Naive thymus-derived CD4-positive, alpha-beta T cell (primary cell): ENCODE measurements at regions of chr2 and their contacts with region 1.

Region 1: GRCh38 chr2:121530212-121530705 is 421 bp upstream of the RNU4ATAC start:
- DNase-seq: peak in 4 of 9 donors; percentile 74 to 91 (median 87)
- ATAC-seq: peak; percentile 83
- H3K4me3 ChIP-seq: peak overlapping the region; percentile 99
- H3K4me3 Mint-ChIP-seq: peak overlapping the region; percentile 85 to 99 (median 96)
- H3K27ac ChIP-seq: peak overlapping the region; percentile 98
- H3K27ac Mint-ChIP-seq: peak overlapping the region; percentile 95 to 100 (median 99)
- H3K4me1 ChIP-seq: peaks cover 9 to 11% of the 10 kb centered on the region in 2 donors
- H3K4me1 Mint-ChIP-seq: peaks cover 18 to 65% (median 43%) of the 10 kb centered on the region in 7 donors
- H3K27me3 ChIP-seq: no peaks in the 10 kb centered on the region
- H3K27me3 Mint-ChIP-seq: no peaks in the 10 kb centered on the region

Region 2: GRCh38 chr2:121400201-121400600 is 130.1 kb before region 1 on chr2:
- CTCF ChIA-PET with region 1: interaction called, 4 read pairs
- POLR2A ChIA-PET with region 1: no interaction called
- intact Hi-C with region 1: loop called (anchors 1 kb)
- DNase-seq: no peak
- ATAC-seq: no peak
- H3K4me3 ChIP-seq: no peak overlapping the region
- H3K4me3 Mint-ChIP-seq: no peak overlapping the region
- H3K27ac ChIP-seq: no peak overlapping the region
- H3K27ac Mint-ChIP-seq: peak overlapping the region in 2 of 9 donors; percentile 38 to 67
- H3K4me1 ChIP-seq: no peaks in the 10 kb centered on the region
- H3K4me1 Mint-ChIP-seq: peaks cover 0 to 3% (median 0%) of the 10 kb centered on the region in 7 donors
- H3K27me3 ChIP-seq: no peaks in the 10 kb centered on the region
- H3K27me3 Mint-ChIP-seq: no peaks in the 10 kb centered on the region

Region 3: GRCh38 chr2:121596221-121597080 is 66.2 kb after region 1 on chr2:
- CTCF ChIA-PET with region 1: no interaction called
- POLR2A ChIA-PET with region 1: no interaction called
- intact Hi-C with region 1: loop called (anchors 2 kb)
- DNase-seq: peak in 4 of 9 donors; percentile 9 to 17 (median 14)
- ATAC-seq: peak; percentile 95
- H3K4me3 ChIP-seq: no peak overlapping the region
- H3K4me3 Mint-ChIP-seq: peak overlapping the region; percentile 51 to 90 (median 77)
- H3K27ac ChIP-seq: peak overlapping the region; percentile 55
- H3K27ac Mint-ChIP-seq: peak overlapping the region; percentile 33 to 96 (median 83)
- H3K4me1 ChIP-seq: peaks cover 9 to 14% of the 10 kb centered on the region in 2 donors
- H3K4me1 Mint-ChIP-seq: peaks cover 30 to 66% (median 59%) of the 10 kb centered on the region in 7 donors
- H3K27me3 ChIP-seq: no peaks in the 10 kb centered on the region
- H3K27me3 Mint-ChIP-seq: no peaks in the 10 kb centered on the region

Region 4: GRCh38 chr2:121699421-121700333 is 169.4 kb after region 1 on chr2:
- CTCF ChIA-PET with region 1: no interaction called
- POLR2A ChIA-PET with region 1: interaction called, 11 read pairs
- intact Hi-C with region 1: loop called in 1 of 2 experiments (anchors 1 kb)
- DNase-seq: peak; percentile 32 to 80 (median 56)
- ATAC-seq: peak; percentile 98
- H3K4me3 ChIP-seq: peak overlapping the region; percentile 12
- H3K4me3 Mint-ChIP-seq: peak overlapping the region; percentile 73 to 92 (median 82)
- H3K27ac ChIP-seq: no peak overlapping the region
- H3K27ac Mint-ChIP-seq: peak overlapping the region; percentile 73 to 96 (median 90)
- H3K4me1 ChIP-seq: peaks cover 13 to 31% of the 10 kb centered on the region in 2 donors
- H3K4me1 Mint-ChIP-seq: peaks cover 13 to 46% (median 24%) of the 10 kb centered on the region in 7 donors
- H3K27me3 ChIP-seq: no peaks in the 10 kb centered on the region
- H3K27me3 Mint-ChIP-seq: no peaks in the 10 kb centered on the region

Region 5: DNA sequence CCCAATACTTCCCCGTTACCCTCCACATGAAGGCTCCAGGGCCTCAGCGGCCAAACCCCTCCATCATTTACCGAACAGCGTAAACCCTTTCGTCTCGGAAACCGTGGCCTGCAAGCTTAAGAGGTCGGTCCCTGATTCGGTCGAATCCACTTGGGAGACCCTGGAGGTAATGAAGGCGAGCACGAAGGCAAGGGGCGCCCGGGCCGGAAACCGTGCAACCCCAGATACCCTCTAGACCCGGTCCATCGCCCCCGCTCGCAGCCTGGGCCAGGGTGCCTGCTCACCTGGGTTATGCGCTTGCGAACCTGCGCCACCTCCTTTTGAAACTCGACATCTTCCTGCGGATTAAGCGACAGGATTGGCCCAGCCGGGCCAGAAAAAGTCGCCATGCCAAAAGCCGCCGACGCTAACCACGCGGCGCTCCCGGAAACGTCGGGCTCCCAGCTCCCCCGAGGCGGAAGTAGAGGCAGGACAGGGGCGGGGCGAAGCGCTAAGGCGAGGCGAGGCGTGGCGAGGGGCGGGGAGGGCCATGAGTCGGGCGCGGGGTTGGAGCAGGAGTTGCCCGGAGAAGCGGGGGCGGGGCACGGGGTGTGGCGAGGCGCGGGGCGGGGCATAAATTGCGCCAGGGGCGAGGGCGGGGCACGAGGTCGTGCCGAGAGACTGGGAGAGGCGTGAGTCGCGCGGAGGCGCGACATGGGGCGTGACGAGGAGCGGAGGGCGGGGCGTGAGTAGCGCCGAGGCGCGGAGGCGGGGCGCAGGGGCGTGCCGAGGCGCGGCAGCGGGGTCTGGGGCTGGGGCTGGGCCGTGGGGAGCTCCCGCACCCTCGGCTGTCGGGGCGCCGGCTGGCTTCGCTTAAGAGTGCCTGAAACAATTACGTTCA is 206.4 kb after region 1 on chr2 and contains the start of gene NIFK:
- CTCF ChIA-PET with region 1: no interaction called
- POLR2A ChIA-PET with region 1: interaction called, 41 read pairs
- intact Hi-C with region 1: loop called (anchors 1 kb)
- DNase-seq: peak; percentile 98 to 100 (median 99)
- ATAC-seq: peak; percentile 96
- H3K4me3 ChIP-seq: peak within 1 kb of the TSS; percentile 80
- H3K4me3 Mint-ChIP-seq: peak within 1 kb of the TSS; percentile 81 to 99 (median 95)
- H3K27ac ChIP-seq: peak within 1 kb of the TSS; percentile 89
- H3K27ac Mint-ChIP-seq: peak within 1 kb of the TSS; percentile 85 to 99 (median 97)
- H3K4me1 ChIP-seq: peaks cover 13 to 19% of the 10 kb centered on the region in 2 donors
- H3K4me1 Mint-ChIP-seq: peaks cover 17 to 54% (median 38%) of the 10 kb centered on the region in 7 donors
- H3K27me3 ChIP-seq: no peaks in the 10 kb centered on the region
- H3K27me3 Mint-ChIP-seq: no peaks in the 10 kb centered on the region
- total RNA-seq, gene NIFK: 35.3 to 88.1 (median 71.9) TPM

Region 6: GRCh38 chr2:121925466-121925865 is 395.2 kb after region 1 on chr2:
- CTCF ChIA-PET with region 1: no interaction called
- POLR2A ChIA-PET with region 1: no interaction called
- intact Hi-C with region 1: loop called in 1 of 2 experiments (anchors 5 kb)
- DNase-seq: no peak
- ATAC-seq: no peak
- H3K4me3 ChIP-seq: no peak overlapping the region
- H3K4me3 Mint-ChIP-seq: no peak overlapping the region
- H3K27ac ChIP-seq: no peak overlapping the region
- H3K27ac Mint-ChIP-seq: no peak overlapping the region
- H3K4me1 ChIP-seq: no peaks in the 10 kb centered on the region
- H3K4me1 Mint-ChIP-seq: no peaks in the 10 kb centered on the region
- H3K27me3 ChIP-seq: peaks cover 0 to 2% of the 10 kb centered on the region in 2 donors
- H3K27me3 Mint-ChIP-seq: peaks cover 0 to 5% (median 0%) of the 10 kb centered on the region in 5 donors